ENCODE measurements at regions of chr17 and their contacts with region 1.

Region 1: DNA sequence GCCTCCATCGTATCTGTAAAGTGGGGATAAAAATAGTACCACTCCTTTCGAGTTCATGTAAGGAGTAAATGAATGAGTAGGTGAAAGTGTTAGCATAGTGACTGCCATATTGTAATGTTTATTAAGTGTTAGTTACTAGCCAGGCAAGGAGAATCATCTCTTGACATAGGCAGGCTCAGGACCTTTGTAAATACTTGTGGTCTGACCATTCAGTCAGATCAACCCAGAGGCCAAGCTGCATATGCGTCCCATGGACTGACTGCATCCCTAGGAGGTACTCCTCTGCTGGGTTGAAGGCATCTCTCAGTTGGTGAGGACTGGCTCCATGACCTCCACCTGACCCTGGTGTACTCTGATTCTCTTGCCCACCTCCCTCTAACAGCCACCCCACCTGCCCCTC is 40.5 kb upstream of the CDRT4 start:
- DNase-seq: no peak
- ATAC-seq: peak in 1 of 4 donors; percentile 19
- H3K4me3 ChIP-seq: no peak overlapping the region
- H3K27ac ChIP-seq: no peak overlapping the region
- H3K4me1 ChIP-seq: no peaks in the 10 kb centered on the region
- H3K27me3 ChIP-seq: no peaks in the 10 kb centered on the region
- CTCF ChIP-seq: no peak
- POLR2A ChIP-seq: no peak

Region 2: DNA sequence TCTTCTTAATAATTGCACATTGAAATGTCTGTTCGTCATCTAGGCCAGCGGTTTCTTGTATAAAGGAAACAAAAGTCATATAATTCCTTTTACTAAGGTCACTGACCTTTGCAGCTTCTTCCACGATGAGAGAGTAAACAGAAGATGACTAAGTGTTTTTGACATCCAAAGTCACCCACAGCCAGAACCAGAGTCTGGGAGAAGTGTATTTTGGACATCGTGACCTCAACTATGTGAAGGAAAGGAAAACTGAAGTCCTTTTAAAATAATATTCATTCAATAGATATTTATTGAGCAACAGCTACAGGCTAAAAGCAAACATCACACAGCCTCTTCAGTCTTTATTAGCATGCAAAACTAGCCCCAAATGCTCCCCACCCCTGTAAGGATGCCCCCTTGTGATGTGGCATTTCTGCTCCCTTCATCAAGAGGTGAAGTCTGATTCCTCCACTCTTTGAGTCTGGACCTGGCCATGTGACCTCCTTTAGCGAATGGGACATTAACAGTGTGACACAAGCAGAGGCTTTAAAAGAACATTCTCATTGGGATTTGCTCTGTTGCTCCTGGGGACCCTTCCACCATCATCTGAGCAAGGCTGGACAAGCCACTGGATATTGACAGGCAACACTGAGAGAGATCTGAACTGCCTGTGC is 234.6 kb before region 1 on chr17:
- intact Hi-C with region 1: loop called (anchors 5 to 10 kb)
- DNase-seq: no peak
- ATAC-seq: peak in 2 of 4 donors; percentile 36 to 48
- H3K4me3 ChIP-seq: no peak overlapping the region
- H3K27ac ChIP-seq: no peak overlapping the region
- H3K4me1 ChIP-seq: no peaks in the 10 kb centered on the region
- H3K27me3 ChIP-seq: no peaks in the 10 kb centered on the region
- CTCF ChIP-seq: no peak
- POLR2A ChIP-seq: no peak

Region 3: DNA sequence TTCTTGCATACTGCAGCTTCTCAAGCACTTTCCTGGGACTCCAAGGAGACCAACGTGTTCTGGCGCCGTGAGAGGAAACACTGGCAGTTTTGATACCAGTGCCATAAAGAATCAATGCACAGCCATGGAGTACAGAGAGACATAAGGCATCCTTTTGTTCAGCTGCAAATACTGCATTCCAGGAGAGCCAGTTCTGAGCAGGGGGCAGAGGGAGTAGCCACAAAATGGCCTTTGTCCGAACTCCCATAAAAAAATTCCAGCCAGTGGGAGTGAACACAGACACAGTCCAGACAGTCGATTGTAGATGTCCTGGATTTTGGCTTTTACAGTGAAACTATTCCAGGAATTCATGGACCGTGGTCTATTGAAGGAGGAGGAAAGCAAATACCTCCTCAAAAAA is 130.3 kb before region 1 on chr17:
- intact Hi-C with region 1: no loop called
- DNase-seq: no peak
- ATAC-seq: peak in 1 of 4 donors; percentile 22
- H3K4me3 ChIP-seq: no peak overlapping the region
- H3K27ac ChIP-seq: no peak overlapping the region
- H3K4me1 ChIP-seq: no peaks in the 10 kb centered on the region
- H3K27me3 ChIP-seq: no peaks in the 10 kb centered on the region
- CTCF ChIP-seq: no peak
- POLR2A ChIP-seq: no peak

Region 4: GRCh38 chr17:15409721-15410250 is 98.1 kb before region 1 on chr17:
- intact Hi-C with region 1: no loop called
- DNase-seq: no peak
- ATAC-seq: peak in 2 of 4 donors; percentile 18 to 28
- H3K4me3 ChIP-seq: no peak overlapping the region
- H3K27ac ChIP-seq: peak overlapping the region in 2 of 3 donors; percentile 18
- H3K4me1 ChIP-seq: peaks cover 0 to 10% (median 3%) of the 10 kb centered on the region in 4 donors
- H3K27me3 ChIP-seq: no peaks in the 10 kb centered on the region
- CTCF ChIP-seq: no peak
- POLR2A ChIP-seq: no peak